AG04450 (cell line): ENCODE measurements at regions of chr12 and their contacts with region 1.

Region 1: DNA sequence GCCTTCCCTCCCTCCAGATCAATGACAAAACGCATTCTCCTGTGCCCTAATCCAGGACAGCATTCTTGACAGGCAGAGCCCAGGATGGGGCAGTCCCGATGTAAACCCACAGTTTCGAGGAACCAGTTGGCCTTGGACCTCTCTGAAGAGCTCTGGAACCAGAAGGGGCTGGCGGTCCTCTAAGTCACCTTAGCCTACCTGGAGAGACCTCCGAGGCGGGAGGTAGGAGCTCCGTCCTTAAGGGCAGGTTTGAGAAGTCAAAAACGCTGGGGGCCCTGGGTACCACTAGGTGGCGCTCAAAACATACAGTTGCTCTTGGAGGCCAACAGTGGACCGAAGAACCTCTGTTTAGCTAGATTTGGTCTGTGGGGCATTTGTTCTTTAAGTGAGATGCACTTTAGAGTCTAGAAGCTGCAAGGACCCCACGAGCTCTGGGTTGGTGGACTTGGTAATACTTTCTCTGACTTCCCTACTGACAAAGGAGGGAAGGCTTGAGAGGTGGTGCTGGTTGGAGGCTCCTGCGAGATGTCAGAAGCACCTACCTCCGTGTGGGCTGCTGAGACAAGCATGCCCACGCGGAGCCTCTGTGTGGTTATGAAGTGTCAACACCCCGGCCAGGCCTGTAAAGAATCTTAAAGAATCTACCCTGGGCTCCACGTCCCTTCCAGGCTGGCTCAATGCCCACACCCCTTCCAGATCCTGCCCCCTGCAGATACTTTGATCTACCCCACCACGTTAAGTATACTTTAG is 74.8 kb upstream of the CHST11 start:
- DNase-seq: peak; percentile 51
- H3K4me3 ChIP-seq: no peak overlapping the region
- H3K27ac ChIP-seq: no peak overlapping the region
- H3K27me3 ChIP-seq: no peaks in the 10 kb centered on the region
- CTCF ChIP-seq: peak; percentile 99

Region 2: DNA sequence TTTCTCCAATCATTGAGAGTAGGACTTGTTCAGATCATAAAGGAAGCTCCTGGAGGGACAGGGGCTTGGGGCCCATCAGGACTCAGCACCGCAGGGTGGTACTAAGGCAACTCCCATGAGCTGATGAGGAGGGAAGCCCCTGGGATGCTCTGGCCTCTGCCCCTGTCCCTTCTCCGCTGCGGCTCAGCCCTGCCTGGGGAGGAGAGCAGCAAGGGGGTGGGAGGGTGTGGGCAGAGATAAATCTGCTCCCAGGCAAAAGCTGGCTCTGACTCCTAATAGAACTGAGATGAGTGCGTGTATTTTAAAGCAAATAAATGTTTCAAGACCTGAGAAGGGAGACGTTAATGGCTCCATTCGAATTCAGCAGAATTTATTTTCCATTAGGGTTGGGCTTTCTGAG is 22.9 kb after region 1 on chr12:
- CTCF ChIA-PET with region 1: interaction called, 11 read pairs
- POLR2A ChIA-PET with region 1: no interaction called
- DNase-seq: no peak
- H3K4me3 ChIP-seq: no peak overlapping the region
- H3K27ac ChIP-seq: no peak overlapping the region
- H3K27me3 ChIP-seq: no peaks in the 10 kb centered on the region
- CTCF ChIP-seq: no peak

Region 3: GRCh38 chr12:104632724-104633201 is 250.9 kb after region 1 on chr12:
- CTCF ChIA-PET with region 1: no interaction called
- POLR2A ChIA-PET with region 1: no interaction called
- DNase-seq: peak; percentile 26
- H3K4me3 ChIP-seq: peak overlapping the region; percentile 12; the same call in 1 of the 2 replicates
- H3K27ac ChIP-seq: no peak overlapping the region
- H3K27me3 ChIP-seq: no peaks in the 10 kb centered on the region
- CTCF ChIP-seq: no peak

Region 4: DNA sequence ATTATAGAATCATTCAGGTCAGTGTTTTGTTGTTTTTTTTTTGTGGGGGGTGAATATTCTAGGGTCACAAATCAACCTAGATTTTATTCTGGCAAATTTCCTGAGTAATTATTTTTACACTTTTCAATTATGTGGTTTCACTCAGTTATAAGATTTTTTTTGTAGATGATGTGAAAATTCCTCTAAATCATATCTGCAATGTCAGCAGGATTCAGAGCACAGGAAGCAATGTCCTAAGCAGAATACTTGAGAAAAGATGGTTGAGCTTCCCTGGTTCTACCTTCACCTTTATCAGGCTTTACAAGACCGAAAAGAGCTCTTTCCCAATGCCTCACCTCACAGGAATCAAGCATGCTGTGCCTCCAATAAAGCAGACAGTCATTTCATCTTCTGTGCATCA is 451.9 kb after region 1 on chr12:
- CTCF ChIA-PET with region 1: interaction called, 10 read pairs
- POLR2A ChIA-PET with region 1: no interaction called
- DNase-seq: no peak
- H3K4me3 ChIP-seq: no peak overlapping the region
- H3K27ac ChIP-seq: no peak overlapping the region
- H3K27me3 ChIP-seq: no peaks in the 10 kb centered on the region
- CTCF ChIP-seq: no peak

Region 5: GRCh38 chr12:104870797-104871196 is 488.9 kb after region 1 on chr12:
- CTCF ChIA-PET with region 1: interaction called, 177 read pairs
- POLR2A ChIA-PET with region 1: no interaction called
- DNase-seq: no peak
- H3K4me3 ChIP-seq: no peak overlapping the region
- H3K27ac ChIP-seq: no peak overlapping the region
- H3K27me3 ChIP-seq: no peaks in the 10 kb centered on the region
- CTCF ChIP-seq: no peak

Region 6: DNA sequence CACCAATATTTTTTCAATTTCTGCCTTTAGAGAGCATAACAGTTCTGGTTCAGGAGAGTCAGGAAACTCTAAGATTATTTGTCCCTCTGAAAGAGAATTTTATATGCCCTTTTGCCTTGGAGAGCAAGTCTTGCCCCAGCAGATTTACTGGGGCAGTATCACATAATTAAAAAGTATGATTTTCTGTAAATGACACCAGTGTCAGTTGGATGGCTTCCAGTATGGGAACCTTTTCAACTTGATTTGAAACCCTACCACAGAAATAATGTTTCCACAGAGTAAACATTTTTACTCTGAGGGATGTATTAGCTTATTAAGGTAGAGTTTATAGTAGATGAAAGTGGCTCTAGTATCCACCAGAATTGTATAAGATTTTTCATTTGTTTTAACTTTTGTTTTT is 619.6 kb after region 1 on chr12:
- CTCF ChIA-PET with region 1: interaction called, 12 read pairs
- POLR2A ChIA-PET with region 1: no interaction called
- DNase-seq: no peak
- H3K4me3 ChIP-seq: no peak overlapping the region
- H3K27ac ChIP-seq: no peak overlapping the region
- H3K27me3 ChIP-seq: no peaks in the 10 kb centered on the region
- CTCF ChIP-seq: no peak